A673 (cell line): ENCODE measurements at regions of chr4 and their contacts with region 1.

Region 1: GRCh38 chr4:157992038-157992705 is 180.7 kb downstream of the GASK1B start:
- DNase-seq: peak; percentile 82
- H3K4me3 ChIP-seq: peak overlapping the region; percentile 27
- H3K27ac ChIP-seq: no peak overlapping the region
- H3K4me1 ChIP-seq: peaks cover 18% of the 10 kb centered on the region
- H3K27me3 ChIP-seq: no peaks in the 10 kb centered on the region
- CTCF ChIP-seq: peak; percentile 78

Region 2: DNA sequence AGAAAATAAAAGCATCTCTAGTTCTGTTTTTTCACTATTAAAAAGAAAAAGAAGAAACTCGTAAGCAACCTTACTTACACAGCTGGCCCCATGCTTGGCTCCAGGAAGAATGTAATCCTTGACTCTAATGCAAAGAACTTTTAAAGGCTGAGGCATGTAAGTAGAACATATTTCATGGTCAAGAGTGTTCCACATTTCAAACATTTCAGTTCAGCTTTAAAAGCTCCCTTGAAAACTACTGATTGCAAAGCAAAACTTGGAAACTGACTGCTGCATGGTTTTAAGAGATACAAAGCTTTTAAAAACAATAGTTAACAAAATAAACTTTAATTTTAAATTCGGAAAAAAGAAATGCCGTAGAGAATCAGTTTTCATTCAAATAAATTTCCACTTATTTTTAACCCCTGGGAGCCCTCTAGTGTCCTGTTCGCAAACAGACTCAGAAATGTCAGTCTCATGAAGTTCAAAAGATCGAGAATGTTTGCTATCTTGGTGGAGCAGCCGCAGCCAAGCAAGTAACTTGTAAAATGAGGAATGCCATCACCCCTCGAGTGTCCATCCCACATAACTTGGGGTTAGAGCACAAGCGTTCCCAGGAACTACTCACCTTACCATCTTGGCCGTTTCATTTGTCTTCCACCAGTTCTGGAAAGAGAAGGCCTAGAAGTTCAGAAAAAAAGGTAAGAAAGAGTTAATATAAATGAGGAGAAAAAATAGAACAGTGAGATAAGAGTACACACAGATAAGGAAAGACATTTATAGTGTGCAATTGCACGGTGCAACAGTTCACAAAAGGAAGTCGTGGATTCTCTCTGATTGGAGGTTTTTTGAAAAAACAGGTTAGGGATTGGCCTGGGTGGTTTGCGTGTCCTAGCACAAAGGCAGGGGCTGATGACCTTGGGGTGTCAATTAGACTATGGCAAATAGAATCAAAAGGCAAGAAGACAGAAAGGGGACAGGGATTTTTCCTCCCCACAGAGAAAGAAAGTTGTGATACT is 180.4 kb after region 1 on chr4 and contains the start of gene GASK1B:
- CTCF ChIA-PET with region 1: no interaction called
- POLR2A ChIA-PET with region 1: no interaction called
- intact Hi-C with region 1: loop called (anchors 1 kb)
- DNase-seq: peak; percentile 76
- H3K4me3 ChIP-seq: peak within 1 kb of the TSS; percentile 34
- H3K27ac ChIP-seq: peak within 1 kb of the TSS; percentile 62
- H3K4me1 ChIP-seq: peaks cover 19% of the 10 kb centered on the region
- H3K27me3 ChIP-seq: no peaks in the 10 kb centered on the region
- CTCF ChIP-seq: peak; percentile 81
- total RNA-seq, gene GASK1B: 3.1 and 3.8 TPM in 2 replicates

Region 3: DNA sequence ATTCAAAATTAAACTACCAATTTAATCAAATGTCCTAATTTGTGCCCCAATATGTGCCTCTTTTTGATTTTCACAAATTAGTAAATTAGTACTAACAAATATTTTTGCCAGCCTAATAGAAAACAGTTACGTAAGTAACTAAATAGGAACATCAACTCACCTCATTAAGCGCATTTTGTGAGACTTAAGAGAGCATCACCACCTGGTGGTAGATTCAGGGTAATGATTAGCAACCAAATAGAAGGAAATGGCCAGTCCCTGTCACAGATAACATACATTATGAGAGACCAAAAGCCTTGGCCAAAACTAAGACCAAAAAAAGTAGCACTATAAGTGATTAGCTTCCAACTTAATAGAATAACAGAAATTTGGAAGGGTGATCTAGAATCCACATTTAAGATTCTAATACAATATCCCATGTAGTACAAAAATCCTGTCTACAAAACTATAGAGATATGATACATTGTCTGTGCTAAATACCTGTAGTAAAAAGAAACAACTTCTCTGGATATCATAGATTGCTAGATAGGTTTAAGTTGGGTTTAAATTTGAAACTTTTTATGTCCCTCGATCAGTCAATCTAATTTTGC is 632.8 kb after region 1 on chr4:
- CTCF ChIA-PET with region 1: no interaction called
- POLR2A ChIA-PET with region 1: no interaction called
- intact Hi-C with region 1: loop called (anchors 10 kb)
- DNase-seq: peak; percentile 74
- H3K4me3 ChIP-seq: no peak overlapping the region
- H3K27ac ChIP-seq: no peak overlapping the region
- H3K4me1 ChIP-seq: no peaks in the 10 kb centered on the region
- H3K27me3 ChIP-seq: peaks cover 17% of the 10 kb centered on the region
- CTCF ChIP-seq: peak; percentile 86